ENCODE measurements at regions of chr2 and their contacts with region 1.

Region 1: GRCh38 chr2:199739413-199740110 is 111.4 kb downstream of the FTCDNL1 start:
- DNase-seq: peak; percentile 57 to 96
- H3K4me3 ChIP-seq: no peak overlapping the region
- H3K27ac ChIP-seq: no peak overlapping the region
- H3K4me1 ChIP-seq: peaks cover 2 to 11% (median 6%) of the 10 kb centered on the region in 4 experiments; a peak in 4 of 7 replicates
- H3K27me3 ChIP-seq: no peaks in the 10 kb centered on the region
- CTCF ChIP-seq: peak; percentile 76 to 82 (median 81)
- EP300 ChIP-seq: no peak
- POLR2A ChIP-seq: no peak
- RAD21 ChIP-seq: peak; percentile 91 to 92

Region 2: GRCh38 chr2:199488772-199489400 is 250.7 kb before region 1 on chr2:
- CTCF ChIA-PET with region 1: interaction called, 23 read pairs
- POLR2A ChIA-PET with region 1: no interaction called
- DNase-seq: peak in 1 of 2 experiments; percentile 88
- H3K4me3 ChIP-seq: no peak overlapping the region
- H3K27ac ChIP-seq: no peak overlapping the region
- H3K4me1 ChIP-seq: 0 out of 7 replicates have a peak, but pooled peaks cover 0 to 2% (median 0%) of the 10 kb centered on the region in 4 experiments
- H3K27me3 ChIP-seq: no peaks in the 10 kb centered on the region
- CTCF ChIP-seq: peak; percentile 75 to 88 (median 85)
- EP300 ChIP-seq: no peak
- POLR2A ChIP-seq: no peak
- RAD21 ChIP-seq: peak; percentile 73 to 82

Region 3: DNA sequence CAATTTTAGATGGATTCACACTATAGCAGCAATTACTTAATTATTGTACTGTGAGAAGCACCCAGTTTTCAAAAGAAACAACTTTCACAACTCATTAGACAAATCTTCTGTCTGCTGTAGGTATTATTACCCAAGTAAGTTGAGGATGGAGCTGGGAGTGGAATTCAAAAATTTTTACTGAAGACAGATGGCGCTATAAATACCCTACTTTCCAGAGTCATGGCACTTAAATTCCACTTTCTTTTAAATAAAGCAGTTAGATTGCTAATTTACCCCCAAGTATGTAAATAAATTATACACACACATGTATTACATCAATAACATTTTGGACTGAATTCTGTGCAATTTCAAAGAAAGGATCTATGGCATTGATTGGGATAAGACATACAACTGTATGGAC is 55.4 kb before region 1 on chr2:
- CTCF ChIA-PET with region 1: interaction called, 19 read pairs
- POLR2A ChIA-PET with region 1: no interaction called
- DNase-seq: no peak
- H3K4me3 ChIP-seq: no peak overlapping the region
- H3K27ac ChIP-seq: no peak overlapping the region
- H3K4me1 ChIP-seq: no peaks in the 10 kb centered on the region
- H3K27me3 ChIP-seq: no peaks in the 10 kb centered on the region
- CTCF ChIP-seq: peak in 1 of 3 experiments; percentile 34; a peak in 1 of 4 replicates
- EP300 ChIP-seq: no peak
- POLR2A ChIP-seq: no peak
- RAD21 ChIP-seq: 0 out of 4 replicates have a peak, but pooled peaks of 1 of the 2 experiments have one; percentile 8

Region 4: DNA sequence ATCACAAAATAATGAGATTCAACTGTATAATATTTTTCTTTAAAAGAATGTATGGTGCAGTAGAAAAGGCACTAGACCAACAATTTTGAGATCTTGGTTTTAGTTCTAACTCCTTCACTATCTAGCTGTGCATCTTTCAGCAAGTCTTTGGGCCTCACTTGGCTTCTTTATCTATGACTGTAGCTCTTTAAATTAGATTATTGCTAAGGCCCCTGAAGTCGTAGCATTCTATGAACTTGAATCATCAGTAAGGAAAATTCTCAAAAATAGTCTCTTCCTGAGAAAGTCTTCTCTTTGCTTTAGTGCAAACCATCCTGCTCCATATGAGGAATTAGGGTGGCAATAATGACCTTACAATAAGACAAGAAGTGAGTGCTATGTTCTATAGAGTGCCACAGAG is 29.0 kb before region 1 on chr2:
- CTCF ChIA-PET with region 1: interaction called, 68 read pairs
- POLR2A ChIA-PET with region 1: interaction called, 3 read pairs
- DNase-seq: no peak
- H3K4me3 ChIP-seq: no peak overlapping the region
- H3K27ac ChIP-seq: no peak overlapping the region
- H3K4me1 ChIP-seq: no peaks in the 10 kb centered on the region
- H3K27me3 ChIP-seq: no peaks in the 10 kb centered on the region
- CTCF ChIP-seq: no peak
- EP300 ChIP-seq: no peak
- POLR2A ChIP-seq: no peak
- RAD21 ChIP-seq: no peak

Region 5: DNA sequence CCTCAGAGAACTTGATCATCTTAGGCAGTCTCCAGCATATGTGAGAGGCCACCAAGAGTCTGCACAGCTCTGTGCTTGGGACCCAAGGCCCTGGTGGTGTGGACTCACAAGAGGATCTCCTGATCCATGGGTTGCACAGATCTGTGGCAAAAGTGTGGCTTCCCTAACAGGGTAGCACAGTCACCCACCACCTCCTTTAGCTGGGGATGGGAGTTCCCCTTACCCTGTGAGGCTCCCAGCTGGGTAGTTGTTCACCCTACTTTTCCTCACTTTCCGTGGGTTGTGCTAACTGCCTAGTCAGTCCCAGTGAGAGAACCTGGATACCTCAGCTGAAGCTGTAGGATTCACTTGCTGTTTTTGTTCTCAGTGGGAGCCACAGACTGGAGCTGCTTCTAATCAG is 12.3 kb before region 1 on chr2:
- CTCF ChIA-PET with region 1: interaction called, 21 read pairs
- POLR2A ChIA-PET with region 1: no interaction called
- DNase-seq: no peak
- H3K4me3 ChIP-seq: no peak overlapping the region
- H3K27ac ChIP-seq: no peak overlapping the region
- H3K4me1 ChIP-seq: no peaks in the 10 kb centered on the region
- H3K27me3 ChIP-seq: no peaks in the 10 kb centered on the region
- CTCF ChIP-seq: no peak
- EP300 ChIP-seq: no peak
- POLR2A ChIP-seq: no peak
- RAD21 ChIP-seq: no peak

Region 6: GRCh38 chr2:199772035-199772976 is 32.7 kb after region 1 on chr2:
- CTCF ChIA-PET with region 1: interaction called, 11 read pairs
- POLR2A ChIA-PET with region 1: no interaction called
- DNase-seq: no peak
- H3K4me3 ChIP-seq: no peak overlapping the region
- H3K27ac ChIP-seq: no peak overlapping the region
- H3K4me1 ChIP-seq: no peaks in the 10 kb centered on the region
- H3K27me3 ChIP-seq: no peaks in the 10 kb centered on the region
- CTCF ChIP-seq: no peak
- EP300 ChIP-seq: no peak
- POLR2A ChIP-seq: no peak
- RAD21 ChIP-seq: no peak

Region 7: DNA sequence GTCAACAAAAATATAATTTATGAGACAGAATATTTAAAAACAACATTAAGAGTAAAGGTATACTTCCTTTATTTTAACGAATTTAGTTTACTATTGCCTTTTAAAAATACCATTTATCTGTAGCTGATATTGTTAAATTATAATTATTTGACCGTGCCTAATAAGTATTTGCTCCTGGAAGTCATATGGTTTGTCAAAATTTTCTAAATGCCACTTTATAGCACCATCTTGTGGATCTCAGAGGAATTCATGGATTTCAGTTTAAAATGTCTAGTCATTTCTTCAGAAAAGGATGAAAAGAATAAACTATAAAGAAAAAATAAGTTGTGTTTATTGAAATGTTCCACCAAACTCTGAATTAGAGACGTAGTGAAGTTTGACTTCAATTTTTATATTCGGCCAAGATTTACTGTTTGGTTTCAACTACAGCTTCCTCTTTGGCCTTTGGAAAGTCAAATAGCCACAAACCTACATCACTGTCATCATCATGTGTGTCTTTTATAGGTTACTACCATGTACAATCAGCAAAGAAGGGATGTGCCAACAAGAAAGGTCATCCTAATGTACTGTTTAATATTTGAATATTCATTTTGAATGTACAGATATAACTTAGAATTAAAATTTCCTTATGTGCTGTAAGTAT is 121.7 kb after region 1 on chr2:
- CTCF ChIA-PET with region 1: interaction called, 18 read pairs
- POLR2A ChIA-PET with region 1: no interaction called
- DNase-seq: no peak
- H3K4me3 ChIP-seq: no peak overlapping the region
- H3K27ac ChIP-seq: no peak overlapping the region
- H3K4me1 ChIP-seq: peaks cover 0 to 2% (median 0%) of the 10 kb centered on the region in 4 experiments; a peak in 1 of 7 replicates
- H3K27me3 ChIP-seq: no peaks in the 10 kb centered on the region
- CTCF ChIP-seq: peak in 2 of 3 experiments; percentile 36 to 40; a peak in 2 of 4 replicates
- EP300 ChIP-seq: no peak
- POLR2A ChIP-seq: no peak
- RAD21 ChIP-seq: peak; percentile 65 to 80

Region 8: DNA sequence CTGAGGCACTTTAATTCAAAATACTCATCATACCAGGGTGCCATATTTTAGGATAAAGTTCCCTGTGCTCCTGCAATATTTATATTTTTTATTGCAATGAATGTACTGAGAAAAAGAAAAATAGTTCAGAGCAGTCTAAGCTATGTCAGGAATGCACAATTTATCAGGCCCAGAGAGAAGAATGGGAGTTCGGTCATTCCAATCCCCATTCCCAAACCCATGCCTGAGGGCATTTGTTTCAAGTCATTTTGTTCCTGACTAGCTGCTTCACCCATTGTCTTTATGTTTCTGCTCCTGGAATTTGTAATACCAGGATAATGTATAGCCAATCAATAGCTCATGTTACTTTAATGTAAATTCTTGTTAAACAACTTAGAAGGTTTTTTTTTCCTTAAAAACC is 135.8 kb after region 1 on chr2:
- CTCF ChIA-PET with region 1: no interaction called
- POLR2A ChIA-PET with region 1: no interaction called
- DNase-seq: no peak
- H3K4me3 ChIP-seq: no peak overlapping the region
- H3K27ac ChIP-seq: no peak overlapping the region
- H3K4me1 ChIP-seq: peaks cover 0 to 6% (median 0%) of the 10 kb centered on the region in 4 experiments; a peak in 2 of 7 replicates
- H3K27me3 ChIP-seq: no peaks in the 10 kb centered on the region
- CTCF ChIP-seq: no peak
- EP300 ChIP-seq: no peak
- POLR2A ChIP-seq: no peak
- RAD21 ChIP-seq: no peak